Activated naive CD4-positive, alpha-beta T cell treated with anti-CD3 and anti-CD28 coated beads for 36 hours (primary cell): ENCODE measurements at regions of chr1 and their contacts with region 1.

Region 1: GRCh38 chr1:154183045-154183915 is 8.6 kb downstream of the TPM3 start:
- DNase-seq: peak; percentile 98
- H3K4me3 Mint-ChIP-seq: peak overlapping the region; percentile 100
- H3K27ac Mint-ChIP-seq: peak overlapping the region; percentile 99
- H3K4me1 Mint-ChIP-seq: peaks cover 38% of the 10 kb centered on the region
- H3K27me3 Mint-ChIP-seq: no peaks in the 10 kb centered on the region

Region 2: GRCh38 chr1:153429266-153430165 is 753.8 kb before region 1 on chr1:
- CTCF ChIA-PET with region 1: no interaction called
- intact Hi-C with region 1: no loop called
- DNase-seq: no peak
- H3K4me3 Mint-ChIP-seq: no peak overlapping the region
- H3K27ac Mint-ChIP-seq: no peak overlapping the region
- H3K4me1 Mint-ChIP-seq: no peaks in the 10 kb centered on the region
- H3K27me3 Mint-ChIP-seq: peaks cover 22% of the 10 kb centered on the region

Region 3: GRCh38 chr1:154157520-154158306 is 25.6 kb before region 1 on chr1:
- CTCF ChIA-PET with region 1: interaction called, 6 read pairs
- intact Hi-C with region 1: loop called (anchors 1 kb)
- DNase-seq: peak; percentile 87
- H3K4me3 Mint-ChIP-seq: peak overlapping the region; percentile 48
- H3K27ac Mint-ChIP-seq: peak overlapping the region; percentile 96
- H3K4me1 Mint-ChIP-seq: peaks cover 70% of the 10 kb centered on the region
- H3K27me3 Mint-ChIP-seq: no peaks in the 10 kb centered on the region

Region 4: DNA sequence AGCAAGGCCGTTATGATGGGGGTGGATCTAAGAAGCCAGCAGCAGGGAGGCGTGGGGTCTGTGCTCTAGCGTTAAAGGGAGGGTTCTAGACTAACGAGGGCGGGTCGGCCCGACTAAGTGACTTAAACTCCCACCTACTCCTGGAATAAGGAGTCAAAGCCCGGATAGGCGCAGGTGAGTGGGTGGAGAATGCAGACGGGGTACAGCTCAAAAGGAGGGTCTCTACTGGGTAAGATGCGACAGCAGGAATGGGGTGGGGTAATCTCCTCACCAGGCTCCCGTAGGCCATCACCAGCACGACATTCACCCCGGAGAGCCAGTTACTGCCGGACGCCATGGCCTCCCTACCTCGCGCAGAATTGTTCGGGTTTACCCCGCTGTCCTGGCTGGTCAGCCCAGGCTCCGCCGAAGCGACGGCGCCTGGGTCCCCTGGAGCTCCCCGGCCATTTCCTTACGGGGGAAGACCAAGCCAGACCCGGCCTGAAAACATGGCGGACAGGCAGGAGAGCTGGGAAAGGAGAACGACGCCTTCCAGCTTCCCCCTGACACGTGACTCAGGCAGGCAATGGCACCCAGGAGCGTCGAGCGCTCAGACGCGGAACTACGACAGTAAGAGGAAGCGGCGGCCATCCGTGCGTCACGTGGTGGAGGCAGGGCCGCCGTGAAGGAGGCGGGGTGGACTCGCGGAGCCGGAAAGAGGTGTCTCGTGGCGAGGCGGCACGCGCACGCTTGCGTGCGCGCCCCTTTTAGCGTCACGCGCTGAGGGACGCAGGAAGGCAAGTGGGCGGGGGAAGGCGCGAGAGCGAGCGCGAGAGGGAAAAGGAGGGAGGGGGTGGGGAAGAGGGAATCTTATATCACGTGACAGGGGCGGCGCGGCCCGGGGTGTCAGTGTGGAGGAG is 37.0 kb after region 1 on chr1 and contains the start of gene UBAP2L:
- CTCF ChIA-PET with region 1: no interaction called
- intact Hi-C with region 1: loop called (anchors 1 kb)
- DNase-seq: peak; percentile 99
- H3K4me3 Mint-ChIP-seq: peak within 1 kb of the TSS; percentile 96
- H3K27ac Mint-ChIP-seq: peak within 1 kb of the TSS; percentile 98
- H3K4me1 Mint-ChIP-seq: peaks cover 72% of the 10 kb centered on the region
- H3K27me3 Mint-ChIP-seq: no peaks in the 10 kb centered on the region
- total RNA-seq, gene UBAP2L: 154 to 164 TPM

Region 5: DNA sequence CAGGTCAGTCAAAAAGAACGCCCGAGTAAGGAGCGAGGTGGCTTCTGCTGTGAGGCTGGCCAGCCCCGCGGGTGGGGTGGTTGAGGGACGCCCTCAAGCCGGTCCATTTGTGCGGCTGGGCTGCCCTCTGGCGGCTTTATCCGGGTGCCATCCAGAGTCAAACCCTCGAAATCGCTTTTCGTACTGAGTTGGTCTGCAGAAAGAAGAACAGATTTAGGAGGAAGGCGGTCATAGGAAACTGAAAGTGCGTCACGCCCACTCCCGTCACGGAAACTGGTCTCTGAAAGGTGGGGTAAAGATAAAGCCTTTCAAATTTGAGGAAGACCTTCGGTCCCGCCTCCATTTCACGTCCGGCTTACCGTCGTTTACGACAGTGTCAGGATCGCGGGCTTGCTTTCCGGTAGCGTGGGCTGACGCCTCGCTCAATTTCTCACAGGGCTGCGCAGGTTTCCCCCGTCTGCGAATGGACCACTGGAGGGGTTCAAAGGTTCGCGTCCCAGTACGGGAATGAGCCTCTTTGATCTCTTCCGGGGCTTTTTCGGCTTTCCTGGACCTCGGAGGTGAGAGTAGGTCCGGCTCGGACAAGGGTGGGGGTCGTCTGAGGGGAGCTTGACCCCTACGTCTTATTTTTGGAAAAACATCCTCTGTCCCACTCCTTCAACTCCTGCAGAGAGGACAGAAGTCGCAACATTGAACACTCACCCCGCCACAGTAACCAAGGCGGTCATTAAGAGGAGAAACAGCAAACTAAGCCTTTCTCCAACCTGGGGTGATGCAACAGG is 89.1 kb after region 1 on chr1 and contains the start of gene HAX1:
- CTCF ChIA-PET with region 1: interaction called, 8 read pairs
- intact Hi-C with region 1: loop called (anchors 1 kb)
- DNase-seq: peak; percentile 99
- H3K4me3 Mint-ChIP-seq: peak within 1 kb of the TSS; percentile 98
- H3K27ac Mint-ChIP-seq: peak within 1 kb of the TSS; percentile 99
- H3K4me1 Mint-ChIP-seq: peaks cover 40% of the 10 kb centered on the region
- H3K27me3 Mint-ChIP-seq: no peaks in the 10 kb centered on the region
- total RNA-seq, gene HAX1: 204 to 219 TPM

Region 6: GRCh38 chr1:154335025-154335714 is 151.9 kb after region 1 on chr1:
- CTCF ChIA-PET with region 1: interaction called, 4 read pairs
- intact Hi-C with region 1: loop called (anchors 1 kb)
- DNase-seq: peak; percentile 97
- H3K4me3 Mint-ChIP-seq: peak overlapping the region; percentile 30
- H3K27ac Mint-ChIP-seq: peak overlapping the region; percentile 88
- H3K4me1 Mint-ChIP-seq: peaks cover 62% of the 10 kb centered on the region
- H3K27me3 Mint-ChIP-seq: no peaks in the 10 kb centered on the region

Region 7: GRCh38 chr1:154479764-154480421 is 296.6 kb after region 1 on chr1:
- CTCF ChIA-PET with region 1: no interaction called
- intact Hi-C with region 1: loop called (anchors 1 kb)
- DNase-seq: peak; percentile 73
- H3K4me3 Mint-ChIP-seq: no peak overlapping the region
- H3K27ac Mint-ChIP-seq: no peak overlapping the region
- H3K4me1 Mint-ChIP-seq: peaks cover 28% of the 10 kb centered on the region
- H3K27me3 Mint-ChIP-seq: no peaks in the 10 kb centered on the region

Region 8: GRCh38 chr1:154567386-154568156 is 384.3 kb after region 1 on chr1 and contains the start of gene CHRNB2:
- CTCF ChIA-PET with region 1: no interaction called
- intact Hi-C with region 1: no loop called
- DNase-seq: peak; percentile 71
- H3K4me3 Mint-ChIP-seq: peak within 1 kb of the TSS; percentile 49
- H3K27ac Mint-ChIP-seq: no peak within 1 kb of the TSS
- H3K4me1 Mint-ChIP-seq: peaks cover 7% of the 10 kb centered on the region
- H3K27me3 Mint-ChIP-seq: peaks cover 16% of the 10 kb centered on the region
- total RNA-seq, gene CHRNB2: not detected